Gastrocnemius medialis (tissue), 4 donors: ENCODE measurements at regions of chr1 and their contacts with region 1.

Region 1: DNA sequence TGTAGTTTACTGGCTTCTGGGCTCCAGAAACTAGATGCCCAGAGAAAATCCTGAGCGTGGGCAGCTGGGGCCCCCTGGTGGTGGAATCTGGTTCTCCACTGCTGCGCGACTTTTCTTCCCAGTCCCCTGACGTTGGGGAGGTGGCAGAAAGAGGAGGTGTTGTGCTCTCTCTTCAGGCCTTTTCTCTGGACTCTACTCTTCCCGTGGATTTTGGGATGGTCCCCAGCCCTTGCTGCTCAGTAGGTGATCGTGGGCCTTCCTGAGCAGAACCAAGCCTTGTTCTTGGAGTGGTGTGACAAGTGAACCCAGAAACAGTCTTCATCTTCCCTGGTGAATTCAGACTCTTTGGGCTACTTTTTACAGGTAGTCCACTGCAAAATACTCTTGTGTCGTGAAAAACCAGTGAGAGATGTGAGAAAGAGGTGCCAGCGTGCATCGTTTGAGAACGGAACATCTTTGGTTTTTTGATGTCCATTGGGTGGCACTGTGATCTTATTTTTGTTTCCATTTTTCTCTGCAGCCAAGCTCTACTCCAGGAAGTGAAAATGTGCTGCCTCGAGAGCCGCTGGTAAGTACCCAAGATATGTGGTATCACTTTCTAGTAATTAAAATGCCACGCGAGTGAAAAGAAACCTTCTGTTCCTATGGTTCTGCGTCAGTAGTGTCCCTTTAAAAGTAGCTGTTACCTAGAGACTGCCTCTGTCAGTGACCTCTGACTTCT is 20.2 kb downstream of the PEX14 start:
- DNase-seq: peak; percentile 31 to 48
- ATAC-seq: peak; percentile 87 to 93
- H3K4me3 ChIP-seq: peak overlapping the region in 1 of 4 donors; percentile 2
- H3K27ac ChIP-seq: peak overlapping the region; percentile 56 to 78 (median 66)
- H3K4me1 ChIP-seq: peaks cover 20 to 22% of the 10 kb centered on the region in 2 donors
- H3K27me3 ChIP-seq: no peaks in the 10 kb centered on the region
- CTCF ChIP-seq: peak; percentile 70 to 89 (median 86)
- POLR2A ChIP-seq: no peak

Region 2: GRCh38 chr1:9957726-9958125 is 537.2 kb before region 1 on chr1:
- in situ Hi-C with region 1: no loop called
- intact Hi-C with region 1: no loop called
- DNase-seq: no peak
- ATAC-seq: no peak
- H3K4me3 ChIP-seq: no peak overlapping the region
- H3K27ac ChIP-seq: no peak overlapping the region
- H3K4me1 ChIP-seq: peaks cover 0 to 6% of the 10 kb centered on the region in 2 donors
- H3K27me3 ChIP-seq: no peaks in the 10 kb centered on the region
- CTCF ChIP-seq: no peak
- POLR2A ChIP-seq: no peak

Region 3: DNA sequence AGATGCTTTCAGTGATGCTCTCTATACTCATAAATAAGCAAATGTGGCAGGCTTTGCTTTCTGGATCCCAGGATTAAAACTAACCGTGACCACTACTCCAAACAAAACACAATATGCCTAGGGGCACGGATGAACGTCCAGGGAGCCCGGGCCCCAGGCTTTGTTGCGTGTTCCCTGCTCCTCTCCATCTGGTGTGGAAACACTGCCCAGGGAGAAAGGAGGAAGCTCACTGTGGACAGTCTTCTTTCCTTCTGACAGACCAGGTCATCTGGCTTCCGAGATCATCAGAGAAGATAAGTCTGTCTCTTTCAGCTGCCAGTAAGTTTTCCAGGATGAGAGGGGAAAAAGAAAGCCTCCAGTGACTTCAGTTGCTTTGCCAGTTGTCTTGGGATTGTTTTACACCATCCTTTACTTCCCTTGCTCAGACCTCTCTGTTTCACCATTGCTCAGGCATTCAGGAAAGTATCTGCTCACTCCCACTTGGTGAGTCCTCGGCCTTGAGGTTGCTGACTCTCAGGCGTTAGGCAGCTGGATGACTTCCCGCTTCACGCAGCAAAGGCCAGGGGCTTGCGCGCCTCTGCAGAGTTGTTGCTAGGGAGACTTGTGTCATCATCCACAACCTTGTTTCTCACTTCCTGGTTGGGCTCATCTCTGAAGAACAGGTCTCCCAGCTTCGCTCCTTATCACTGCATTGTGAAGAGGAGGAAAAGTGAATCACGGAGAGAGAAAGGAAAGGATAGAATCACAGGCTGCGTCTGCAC is 116.7 kb before region 1 on chr1:
- in situ Hi-C with region 1: no loop called
- intact Hi-C with region 1: loop called (anchors 10 kb)
- DNase-seq: no peak
- ATAC-seq: no peak
- H3K4me3 ChIP-seq: no peak overlapping the region
- H3K27ac ChIP-seq: no peak overlapping the region
- H3K4me1 ChIP-seq: no peaks in the 10 kb centered on the region
- H3K27me3 ChIP-seq: no peaks in the 10 kb centered on the region
- CTCF ChIP-seq: no peak
- POLR2A ChIP-seq: no peak

Region 4: GRCh38 chr1:10474613-10475507 is 20.1 kb before region 1 on chr1 and contains the start of gene PEX14:
- in situ Hi-C with region 1: no loop called
- intact Hi-C with region 1: no loop called
- DNase-seq: peak; percentile 72 to 83
- ATAC-seq: peak; percentile 79 to 83
- H3K4me3 ChIP-seq: peak within 1 kb of the TSS; percentile 77 to 100 (median 84)
- H3K27ac ChIP-seq: peak within 1 kb of the TSS; percentile 85 to 96 (median 92)
- H3K4me1 ChIP-seq: peaks cover 30 to 31% of the 10 kb centered on the region in 2 donors
- H3K27me3 ChIP-seq: no peaks in the 10 kb centered on the region
- CTCF ChIP-seq: no peak
- POLR2A ChIP-seq: peak; percentile 28 to 43
- total RNA-seq, gene PEX14: 8.1 to 17.8 (median 15.8) TPM

Region 5: DNA sequence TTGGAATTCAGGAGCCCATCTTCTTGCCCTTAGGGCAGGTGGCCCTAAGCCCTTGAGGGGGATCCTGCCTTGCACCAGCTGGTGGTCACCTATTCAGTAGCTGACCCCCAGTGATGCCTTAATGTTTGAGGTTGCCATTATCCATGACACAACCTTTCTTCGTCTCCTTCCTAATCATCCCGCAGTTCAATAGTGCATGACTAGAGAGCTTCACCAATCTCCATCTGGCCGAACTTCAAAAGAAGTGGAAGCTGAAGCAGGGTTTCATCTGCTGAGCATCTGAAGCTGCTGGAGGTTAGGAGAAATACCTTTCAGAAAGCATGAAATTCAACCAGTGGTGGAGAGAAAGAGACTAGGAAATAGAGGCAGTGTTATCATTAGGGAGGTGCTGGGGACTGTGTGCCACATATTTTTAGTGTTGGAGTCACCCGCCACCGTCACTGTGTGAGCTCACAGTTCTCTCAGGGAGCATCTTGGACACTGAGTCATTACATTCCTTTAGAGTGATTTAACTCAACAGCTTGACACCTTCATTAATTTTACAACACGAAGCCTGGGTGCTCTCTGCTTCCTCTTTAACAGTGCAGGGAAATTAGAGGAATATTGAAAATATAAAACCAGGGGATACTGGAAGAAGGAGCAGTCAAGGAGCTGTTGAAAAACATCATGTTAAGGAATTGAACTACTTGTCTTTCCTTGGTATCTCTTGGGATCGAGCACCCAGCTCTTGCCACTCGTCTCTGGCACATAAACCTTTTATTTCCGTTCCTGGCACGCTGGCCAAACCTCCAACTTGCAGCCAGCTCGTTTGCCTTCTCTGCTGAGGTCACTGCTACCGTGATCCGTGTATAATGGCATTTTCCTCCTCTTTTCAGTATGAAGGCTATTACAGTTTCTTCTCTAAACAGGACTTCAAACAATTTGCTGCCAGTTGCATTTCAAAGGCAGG is 33.4 kb after region 1 on chr1:
- in situ Hi-C with region 1: no loop called
- intact Hi-C with region 1: loop called (anchors 1 kb)
- DNase-seq: peak; percentile 50 to 70
- ATAC-seq: peak; percentile 97 to 98
- H3K4me3 ChIP-seq: peak overlapping the region in 1 of 4 donors; percentile 4
- H3K27ac ChIP-seq: peak overlapping the region; percentile 14 to 75 (median 66)
- H3K4me1 ChIP-seq: peaks cover 24 to 38% of the 10 kb centered on the region in 2 donors
- H3K27me3 ChIP-seq: no peaks in the 10 kb centered on the region
- CTCF ChIP-seq: no peak
- POLR2A ChIP-seq: no peak

Region 6: GRCh38 chr1:10873189-10873588 is 378.3 kb after region 1 on chr1:
- in situ Hi-C with region 1: loop called in 1 of 4 experiments (anchors 10 kb)
- intact Hi-C with region 1: no loop called
- DNase-seq: no peak
- ATAC-seq: no peak
- H3K4me3 ChIP-seq: no peak overlapping the region
- H3K27ac ChIP-seq: no peak overlapping the region
- H3K4me1 ChIP-seq: no peaks in the 10 kb centered on the region
- H3K27me3 ChIP-seq: no peaks in the 10 kb centered on the region
- CTCF ChIP-seq: no peak
- POLR2A ChIP-seq: no peak